ENCODE measurements at regions of chr17 and their contacts with region 1.

Region 1: GRCh38 chr17:75199886-75200618 is 5.4 kb upstream of the NUP85 start:
- DNase-seq: no peak
- H3K4me3 ChIP-seq: no peak overlapping the region
- H3K27ac ChIP-seq: no peak overlapping the region
- H3K4me1 ChIP-seq: no peaks in the 10 kb centered on the region
- H3K27me3 ChIP-seq: no peaks in the 10 kb centered on the region
- CTCF ChIP-seq: no peak
- POLR2A ChIP-seq: no peak

Region 2: DNA sequence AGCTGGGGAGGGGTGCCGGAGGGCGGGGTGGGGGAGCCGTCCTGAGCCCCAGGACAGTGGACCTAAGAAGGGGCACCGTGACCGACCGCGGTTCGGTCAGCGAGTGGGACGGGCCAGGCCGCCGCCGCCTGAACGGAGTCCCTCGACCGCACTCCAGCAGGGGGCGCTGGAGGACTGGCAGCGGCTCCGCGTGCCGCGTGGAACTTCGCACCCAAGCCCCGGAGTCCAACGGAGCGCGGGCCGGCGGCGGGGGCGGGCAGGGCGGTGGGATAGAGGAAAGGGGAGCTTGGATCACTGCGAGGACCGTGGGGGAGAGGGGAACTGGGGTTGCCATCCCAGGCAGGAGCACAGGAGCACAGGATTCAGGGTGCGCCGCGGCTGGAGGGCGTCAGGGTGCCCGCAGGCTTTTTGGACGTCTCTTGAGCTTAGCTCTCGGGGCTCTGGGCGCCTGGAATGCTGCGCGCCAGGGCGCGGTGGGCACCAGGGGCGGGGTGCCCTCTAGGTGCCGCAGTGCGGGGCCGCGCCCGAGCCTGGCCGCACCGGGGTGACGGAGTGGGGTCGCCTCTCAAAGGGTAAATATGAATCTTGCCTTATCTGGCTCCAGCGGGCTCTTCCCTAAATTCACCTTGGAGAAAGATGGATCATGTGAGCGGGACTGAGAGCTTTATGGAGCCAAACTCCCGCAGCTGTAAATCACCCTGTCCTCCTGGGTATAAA is 276.4 kb before region 1 on chr17:
- CTCF ChIA-PET with region 1: interaction called, 3 read pairs
- POLR2A ChIA-PET with region 1: no interaction called
- dilution Hi-C with region 1: no loop called
- intact Hi-C with region 1: loop called (anchors 5 kb)
- DNase-seq: peak; percentile 39
- H3K4me3 ChIP-seq: no peak overlapping the region
- H3K27ac ChIP-seq: no peak overlapping the region
- H3K4me1 ChIP-seq: peaks cover 4% of the 10 kb centered on the region
- H3K27me3 ChIP-seq: peaks cover 44 to 45% of the 10 kb centered on the region in 2 experiments
- CTCF ChIP-seq: peak; percentile 55 to 90
- POLR2A ChIP-seq: no peak

Region 3: GRCh38 chr17:75313941-75314551 is 114.0 kb after region 1 on chr17:
- CTCF ChIA-PET with region 1: no interaction called
- POLR2A ChIA-PET with region 1: no interaction called
- dilution Hi-C with region 1: no loop called
- intact Hi-C with region 1: no loop called
- DNase-seq: no peak
- H3K4me3 ChIP-seq: no peak overlapping the region
- H3K27ac ChIP-seq: no peak overlapping the region
- H3K4me1 ChIP-seq: no peaks in the 10 kb centered on the region
- H3K27me3 ChIP-seq: no peaks in the 10 kb centered on the region
- CTCF ChIP-seq: no peak
- POLR2A ChIP-seq: no peak

Measured in endothelial cell of umbilical vein (primary cell).